Activated B cell treated with CpG ODN at 0.5 μM for 24 hours (primary cell): ENCODE measurements at regions of chr5 and their contacts with region 1.

Region 1: DNA sequence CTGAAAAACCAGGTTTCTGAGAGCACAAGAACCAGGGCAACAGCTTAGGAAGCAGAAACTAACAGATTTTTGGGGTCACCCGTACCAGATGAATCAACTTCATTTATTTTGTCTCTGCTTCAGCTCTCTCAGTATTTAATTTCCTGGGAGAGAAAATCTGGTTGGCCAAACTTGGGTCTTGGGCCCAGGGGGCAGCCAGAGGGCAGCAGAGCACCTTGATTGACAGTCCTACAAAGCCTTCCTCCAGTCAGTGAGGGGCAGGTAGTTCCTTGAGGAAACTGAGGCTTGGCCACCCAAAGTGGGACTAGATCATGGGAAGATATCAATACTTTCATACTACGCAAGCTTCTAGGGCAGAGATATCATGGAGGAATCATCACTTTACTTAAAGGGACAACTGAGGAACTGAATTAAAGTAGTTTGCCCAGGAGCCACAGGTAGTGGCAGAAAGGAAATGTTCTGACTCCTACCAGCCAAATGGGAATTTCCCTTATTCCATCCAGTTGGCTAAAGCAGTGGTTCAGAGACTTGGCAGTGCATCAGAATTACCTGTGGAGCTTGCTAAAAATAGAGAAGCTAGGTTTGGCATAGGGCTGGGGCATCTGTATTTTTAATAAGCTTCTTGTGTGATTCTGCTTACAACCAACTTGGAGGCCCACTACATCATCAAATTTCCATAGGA is 21.5 kb upstream of the ARHGAP26 start:
- DNase-seq: peak; percentile 46
- ATAC-seq: peak; percentile 49
- H3K4me3 Mint-ChIP-seq: no peak overlapping the region
- H3K27ac Mint-ChIP-seq: peak overlapping the region; percentile 15
- H3K4me1 Mint-ChIP-seq: no peaks in the 10 kb centered on the region
- H3K27me3 Mint-ChIP-seq: peaks cover 9% of the 10 kb centered on the region
- CTCF ChIP-seq: peak; percentile 74

Region 2: GRCh38 chr5:142600611-142601358 is 147.9 kb before region 1 on chr5:
- CTCF ChIA-PET with region 1: no interaction called
- POLR2A ChIA-PET with region 1: no interaction called
- intact Hi-C with region 1: no loop called
- DNase-seq: no peak
- ATAC-seq: no peak
- H3K4me3 Mint-ChIP-seq: no peak overlapping the region
- H3K27ac Mint-ChIP-seq: no peak overlapping the region
- H3K4me1 Mint-ChIP-seq: no peaks in the 10 kb centered on the region
- H3K27me3 Mint-ChIP-seq: peaks cover 32% of the 10 kb centered on the region
- CTCF ChIP-seq: no peak

Region 3: GRCh38 chr5:142769741-142770631 is 21.3 kb after region 1 on chr5 and contains the start of gene ARHGAP26:
- CTCF ChIA-PET with region 1: interaction called, 11 read pairs
- POLR2A ChIA-PET with region 1: no interaction called
- intact Hi-C with region 1: loop called (anchors 1 kb)
- DNase-seq: peak; percentile 89
- ATAC-seq: peak; percentile 95
- H3K4me3 Mint-ChIP-seq: peak within 1 kb of the TSS; percentile 97
- H3K27ac Mint-ChIP-seq: peak within 1 kb of the TSS; percentile 91
- H3K4me1 Mint-ChIP-seq: peaks cover 25% of the 10 kb centered on the region
- H3K27me3 Mint-ChIP-seq: no peaks in the 10 kb centered on the region
- CTCF ChIP-seq: no peak
- total RNA-seq, gene ARHGAP26: 14.0 and 20.9 TPM in 2 replicates

Region 4: DNA sequence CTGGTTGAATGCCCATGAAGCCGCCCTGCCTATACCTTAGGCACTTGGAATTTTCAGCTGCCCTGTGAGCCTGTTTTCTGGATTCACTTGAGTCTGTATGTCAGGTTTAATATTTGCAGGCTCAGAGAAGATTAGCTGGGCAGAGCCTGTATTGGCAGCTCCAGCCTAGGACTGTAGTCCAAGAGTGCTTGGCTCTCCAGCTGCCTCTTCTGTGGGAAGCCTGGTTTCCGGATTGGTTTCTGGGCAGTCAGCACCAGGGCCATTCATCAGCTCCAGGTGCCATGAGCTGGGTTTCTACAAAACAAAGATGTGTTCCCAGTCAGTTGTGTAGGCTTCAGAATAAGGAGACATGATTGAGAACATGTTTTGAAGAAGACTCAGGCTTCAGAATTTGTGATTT is 111.6 kb after region 1 on chr5:
- CTCF ChIA-PET with region 1: interaction called, 51 read pairs
- POLR2A ChIA-PET with region 1: no interaction called
- intact Hi-C with region 1: no loop called
- DNase-seq: no peak
- ATAC-seq: no peak
- H3K4me3 Mint-ChIP-seq: no peak overlapping the region
- H3K27ac Mint-ChIP-seq: no peak overlapping the region
- H3K4me1 Mint-ChIP-seq: peaks cover 6% of the 10 kb centered on the region
- H3K27me3 Mint-ChIP-seq: no peaks in the 10 kb centered on the region
- CTCF ChIP-seq: no peak

Region 5: GRCh38 chr5:142874537-142874936 is 125.8 kb after region 1 on chr5:
- CTCF ChIA-PET with region 1: interaction called, 386 read pairs
- POLR2A ChIA-PET with region 1: interaction called, 3 read pairs
- intact Hi-C with region 1: no loop called
- DNase-seq: no peak
- ATAC-seq: no peak
- H3K4me3 Mint-ChIP-seq: no peak overlapping the region
- H3K27ac Mint-ChIP-seq: no peak overlapping the region
- H3K4me1 Mint-ChIP-seq: no peaks in the 10 kb centered on the region
- H3K27me3 Mint-ChIP-seq: no peaks in the 10 kb centered on the region
- CTCF ChIP-seq: no peak

Region 6: DNA sequence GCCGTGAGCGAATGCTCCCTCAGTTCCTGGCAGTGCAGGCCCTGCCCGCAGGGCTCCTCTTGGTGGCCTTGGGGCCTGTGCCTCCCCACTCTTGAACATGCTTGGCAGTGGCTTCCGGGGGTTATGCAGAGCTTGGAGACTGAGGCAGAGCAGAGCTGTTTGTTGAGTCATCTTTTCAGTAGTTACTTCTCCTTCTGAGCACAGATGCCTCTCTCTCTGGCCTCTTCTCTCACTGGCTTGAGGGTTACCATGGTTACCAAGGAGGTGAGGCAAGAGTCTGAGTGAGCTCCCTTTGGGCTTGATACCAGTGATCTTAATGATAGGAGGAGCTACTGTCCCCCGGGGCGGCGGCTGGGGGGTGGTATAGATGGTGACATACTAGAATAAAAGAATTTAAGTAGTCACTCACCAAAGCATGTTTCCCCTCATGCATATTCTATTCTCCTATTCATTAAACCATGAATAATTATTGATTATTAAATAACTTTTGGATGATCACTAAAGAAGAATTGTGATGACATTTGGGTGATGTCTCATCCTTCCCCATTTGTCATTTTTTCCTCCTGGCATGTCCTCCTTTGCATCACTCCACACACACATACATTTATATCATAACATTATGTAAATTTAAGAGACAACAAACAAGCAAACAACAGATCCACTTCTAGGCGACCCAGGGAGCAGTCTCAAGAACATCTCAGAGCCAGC is 132.5 kb after region 1 on chr5:
- CTCF ChIA-PET with region 1: interaction called, 386 read pairs
- POLR2A ChIA-PET with region 1: interaction called, 6 read pairs
- intact Hi-C with region 1: loop called (anchors 1 kb)
- DNase-seq: no peak
- ATAC-seq: peak; percentile 85
- H3K4me3 Mint-ChIP-seq: no peak overlapping the region
- H3K27ac Mint-ChIP-seq: no peak overlapping the region
- H3K4me1 Mint-ChIP-seq: peaks cover 10% of the 10 kb centered on the region
- H3K27me3 Mint-ChIP-seq: no peaks in the 10 kb centered on the region
- CTCF ChIP-seq: no peak

Region 7: GRCh38 chr5:142888469-142889085 is 139.9 kb after region 1 on chr5:
- CTCF ChIA-PET with region 1: interaction called, 386 read pairs
- POLR2A ChIA-PET with region 1: no interaction called
- intact Hi-C with region 1: loop called (anchors 1 kb)
- DNase-seq: no peak
- ATAC-seq: no peak
- H3K4me3 Mint-ChIP-seq: no peak overlapping the region
- H3K27ac Mint-ChIP-seq: no peak overlapping the region
- H3K4me1 Mint-ChIP-seq: no peaks in the 10 kb centered on the region
- H3K27me3 Mint-ChIP-seq: no peaks in the 10 kb centered on the region
- CTCF ChIP-seq: peak; percentile 67

Region 8: DNA sequence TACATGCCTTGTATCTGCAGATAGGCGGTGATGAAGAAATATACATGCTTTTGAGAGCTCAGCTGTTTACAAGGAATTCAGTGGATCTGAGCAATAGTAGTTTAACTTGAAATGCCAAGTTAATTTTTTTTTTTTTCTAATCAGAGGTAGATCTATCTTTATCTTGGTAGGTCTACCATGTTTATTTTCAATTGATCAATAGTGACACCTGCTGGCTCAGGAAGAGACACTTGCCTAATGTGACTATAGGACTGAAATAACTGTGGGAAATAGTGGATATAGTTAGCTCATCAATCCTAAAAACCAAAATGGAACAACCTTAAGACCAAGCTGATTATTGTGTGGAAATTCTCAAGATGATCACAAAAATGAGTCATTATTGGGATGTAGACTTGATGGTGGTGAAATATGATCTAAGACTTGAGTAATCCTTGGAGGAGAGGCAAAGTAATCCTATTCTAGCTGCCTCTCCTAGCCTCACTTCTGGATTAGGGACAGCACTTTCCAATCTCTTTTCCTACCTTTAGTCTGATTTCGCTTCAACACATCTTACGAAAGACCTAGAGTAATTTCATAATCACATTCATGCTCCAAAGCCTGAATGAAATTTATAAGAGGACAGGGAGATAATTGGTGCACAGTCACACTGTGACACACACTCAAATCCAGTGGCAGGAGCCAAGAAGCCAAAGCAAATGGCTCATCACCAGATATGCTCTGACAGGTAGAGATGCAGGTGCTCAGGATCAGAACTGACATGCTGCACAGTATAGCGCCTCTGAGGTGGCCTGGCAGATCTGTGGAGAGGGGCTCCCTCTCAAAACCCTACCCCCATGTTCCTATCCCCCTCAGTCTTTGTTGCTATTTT is 1219.5 kb after region 1 on chr5:
- CTCF ChIA-PET with region 1: no interaction called
- POLR2A ChIA-PET with region 1: no interaction called
- intact Hi-C with region 1: loop called (anchors 2 kb)
- DNase-seq: no peak
- ATAC-seq: no peak
- H3K4me3 Mint-ChIP-seq: no peak overlapping the region
- H3K27ac Mint-ChIP-seq: no peak overlapping the region
- H3K4me1 Mint-ChIP-seq: peaks cover 8% of the 10 kb centered on the region
- H3K27me3 Mint-ChIP-seq: no peaks in the 10 kb centered on the region
- CTCF ChIP-seq: no peak